ENCODE measurements at regions of chr15 and their contacts with region 1.

Region 1: DNA sequence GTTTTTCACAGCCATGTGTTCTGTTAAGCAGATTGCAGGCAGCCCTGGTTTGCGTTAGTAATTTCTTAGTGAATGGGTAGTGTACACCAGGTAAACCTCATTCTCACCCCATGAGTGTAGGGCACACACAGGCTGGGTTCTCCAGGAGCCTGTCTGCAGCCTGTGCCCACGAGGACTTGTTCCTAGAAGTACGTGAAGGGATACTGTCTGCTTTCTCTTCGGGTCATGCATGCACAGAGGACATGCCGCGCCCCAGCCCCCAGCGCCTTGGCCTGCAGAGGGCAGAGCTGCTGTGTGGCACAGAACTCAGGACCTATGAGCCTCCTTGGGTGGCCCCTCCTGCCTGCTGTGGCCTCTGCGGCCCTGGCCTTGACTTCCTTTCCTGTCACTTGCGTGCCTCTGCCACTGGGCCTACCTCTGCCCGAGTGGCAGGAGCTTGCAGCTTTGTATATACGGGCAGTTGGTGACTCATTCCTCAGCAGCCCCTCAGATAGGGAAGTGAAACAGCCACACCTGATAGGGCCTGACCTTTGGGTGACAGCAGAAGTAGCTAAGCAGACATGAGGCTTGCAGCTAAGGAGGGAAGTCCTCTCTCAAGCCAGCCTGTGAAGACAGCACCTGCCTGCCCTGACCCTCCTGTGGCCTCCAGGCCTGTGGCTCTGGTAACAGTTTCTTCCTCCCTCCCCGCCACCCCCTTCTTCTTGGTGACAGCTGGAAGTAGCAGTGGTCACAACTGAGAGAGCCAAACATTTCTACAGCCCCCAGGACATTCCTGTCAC is 19.5 kb downstream of the PPCDC start:
- DNase-seq: peak; percentile 100
- ATAC-seq: peak; percentile 79
- H3K4me3 ChIP-seq: peak overlapping the region; percentile 50; the same call in 1 of the 2 replicates
- H3K27ac ChIP-seq: peak overlapping the region; percentile 100
- H3K4me1 ChIP-seq: peaks cover 65% of the 10 kb centered on the region
- H3K27me3 ChIP-seq: no peaks in the 10 kb centered on the region
- CTCF ChIP-seq: peak; percentile 77 to 89 (median 89)
- EP300 ChIP-seq: peak; percentile 99
- POLR2A ChIP-seq: peak; percentile 90
- RAD21 ChIP-seq: peak; percentile 81

Region 2: DNA sequence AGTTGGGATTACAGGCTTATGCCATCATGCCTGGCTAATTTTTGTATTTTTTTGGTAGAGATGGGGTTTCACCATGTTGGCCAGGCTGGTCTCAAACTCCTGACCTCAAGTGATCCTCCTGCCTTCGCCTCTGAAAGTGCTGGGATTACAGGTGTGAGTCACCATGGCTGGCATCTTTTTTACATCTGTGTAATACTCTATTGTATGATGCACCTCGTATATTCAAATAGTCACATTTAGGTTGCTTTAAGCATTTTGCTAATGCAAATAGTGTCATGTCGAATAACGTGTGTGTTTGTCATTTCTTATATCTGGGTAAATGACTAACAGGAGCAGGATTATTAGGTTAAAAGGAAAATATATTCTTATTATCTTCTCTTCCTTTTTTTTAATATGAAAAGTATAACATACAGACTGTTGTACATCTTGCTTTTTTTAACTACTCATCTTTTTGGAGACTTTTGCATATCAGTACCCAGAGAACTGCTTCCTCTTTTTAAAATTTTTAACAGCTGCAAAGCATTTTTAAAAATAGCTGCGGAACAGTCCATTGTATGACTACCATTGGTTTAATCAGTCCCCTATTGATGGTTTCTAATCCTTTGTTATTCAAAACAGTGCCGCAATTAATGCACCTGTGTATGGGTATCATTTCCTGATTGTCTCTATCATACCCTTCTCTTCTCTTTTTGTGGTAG is 34.1 kb before region 1 on chr15:
- CTCF ChIA-PET with region 1: interaction called, 3 read pairs
- POLR2A ChIA-PET with region 1: interaction called, 3 read pairs
- RAD21 ChIA-PET with region 1: interaction called, 21 read pairs
- SMC1A ChIA-PET with region 1: interaction called, 7 read pairs
- in situ Hi-C with region 1: no loop called
- intact Hi-C with region 1: no loop called
- DNase-seq: peak; percentile 83
- ATAC-seq: peak; percentile 89
- H3K4me3 ChIP-seq: peak overlapping the region; percentile 34; the same call in 1 of the 2 replicates
- H3K27ac ChIP-seq: peak overlapping the region; percentile 93
- H3K4me1 ChIP-seq: peaks cover 28% of the 10 kb centered on the region
- H3K27me3 ChIP-seq: no peaks in the 10 kb centered on the region
- CTCF ChIP-seq: no peak
- EP300 ChIP-seq: peak; percentile 50 to 75; a peak in 3 of 4 replicates
- POLR2A ChIP-seq: no peak
- RAD21 ChIP-seq: no peak

Region 3: GRCh38 chr15:75029378-75030022 is 13.4 kb before region 1 on chr15:
- CTCF ChIA-PET with region 1: interaction called, 48 read pairs
- POLR2A ChIA-PET with region 1: interaction called, 14 read pairs
- RAD21 ChIA-PET with region 1: interaction called, 36 read pairs
- SMC1A ChIA-PET with region 1: interaction called, 18 read pairs
- in situ Hi-C with region 1: no loop called
- intact Hi-C with region 1: no loop called
- DNase-seq: no peak
- ATAC-seq: peak; percentile 90
- H3K4me3 ChIP-seq: 0 out of 2 replicates have a peak overlapping the region, but pooled peaks have one; percentile 26
- H3K27ac ChIP-seq: peak overlapping the region; percentile 74
- H3K4me1 ChIP-seq: peaks cover 49% of the 10 kb centered on the region
- H3K27me3 ChIP-seq: no peaks in the 10 kb centered on the region
- CTCF ChIP-seq: peak; percentile 89 to 97 (median 92); a peak in 5 of 6 replicates
- EP300 ChIP-seq: no peak
- POLR2A ChIP-seq: no peak
- RAD21 ChIP-seq: peak; percentile 98

Region 4: DNA sequence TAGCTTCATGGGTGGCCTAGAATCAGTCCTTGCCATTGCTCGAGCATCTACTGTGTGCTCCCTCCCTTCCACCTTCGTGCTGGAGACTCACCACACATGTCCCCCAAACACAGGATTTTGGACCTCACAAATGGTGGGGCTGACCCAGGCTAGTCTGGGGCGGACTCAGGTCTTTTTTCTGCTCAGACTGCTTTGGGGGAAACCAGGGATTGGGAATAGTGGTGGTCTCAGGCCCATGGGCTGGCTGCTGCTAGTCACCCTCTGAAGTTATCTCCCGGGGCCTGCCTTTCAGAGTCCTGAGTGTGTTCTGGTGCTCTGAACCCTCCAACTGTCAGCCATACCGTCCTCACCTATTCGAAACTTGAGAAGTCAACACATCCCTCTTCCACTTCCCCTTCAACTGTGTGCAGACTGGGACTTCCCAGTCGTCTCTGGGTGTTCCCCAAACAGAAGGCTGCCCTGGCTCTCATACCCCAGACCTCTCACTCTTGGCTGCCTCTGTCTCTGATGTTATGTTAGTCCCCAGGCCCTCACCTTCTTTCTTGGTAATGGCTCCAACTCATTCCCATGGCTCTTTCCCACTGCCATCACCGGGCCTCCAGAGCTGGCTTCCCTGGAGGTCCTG is 26.5 kb after region 1 on chr15:
- CTCF ChIA-PET with region 1: interaction called, 3 read pairs
- POLR2A ChIA-PET with region 1: interaction called, 5 read pairs
- RAD21 ChIA-PET with region 1: no interaction called
- SMC1A ChIA-PET with region 1: no interaction called
- in situ Hi-C with region 1: no loop called
- intact Hi-C with region 1: loop called (anchors 1 kb)
- DNase-seq: peak; percentile 87
- ATAC-seq: peak; percentile 92
- H3K4me3 ChIP-seq: no peak overlapping the region
- H3K27ac ChIP-seq: peak overlapping the region; percentile 89
- H3K4me1 ChIP-seq: peaks cover 58% of the 10 kb centered on the region
- H3K27me3 ChIP-seq: no peaks in the 10 kb centered on the region
- CTCF ChIP-seq: no peak
- EP300 ChIP-seq: peak; percentile 90 to 91; a peak in 3 of 4 replicates
- POLR2A ChIP-seq: peak; percentile 65
- RAD21 ChIP-seq: no peak; the same call in 1 of the 2 replicates

Region 5: GRCh38 chr15:75104804-75105535 is 62.1 kb after region 1 on chr15:
- CTCF ChIA-PET with region 1: no interaction called
- POLR2A ChIA-PET with region 1: interaction called, 8 read pairs
- RAD21 ChIA-PET with region 1: interaction called, 3 read pairs
- SMC1A ChIA-PET with region 1: interaction called, 4 read pairs
- in situ Hi-C with region 1: no loop called
- intact Hi-C with region 1: loop called (anchors 1 kb)
- DNase-seq: peak; percentile 88
- ATAC-seq: peak; percentile 73
- H3K4me3 ChIP-seq: no peak overlapping the region
- H3K27ac ChIP-seq: peak overlapping the region; percentile 76
- H3K4me1 ChIP-seq: peaks cover 59% of the 10 kb centered on the region
- H3K27me3 ChIP-seq: no peaks in the 10 kb centered on the region
- CTCF ChIP-seq: 0 out of 6 replicates have a peak, but pooled peaks of 1 of the 3 experiments have one; percentile 6
- EP300 ChIP-seq: peak; percentile 61 to 76; a peak in 3 of 4 replicates
- POLR2A ChIP-seq: no peak; the same call in 1 of the 2 replicates
- RAD21 ChIP-seq: 0 out of 2 replicates have a peak, but pooled peaks have one; percentile 21

Region 6: DNA sequence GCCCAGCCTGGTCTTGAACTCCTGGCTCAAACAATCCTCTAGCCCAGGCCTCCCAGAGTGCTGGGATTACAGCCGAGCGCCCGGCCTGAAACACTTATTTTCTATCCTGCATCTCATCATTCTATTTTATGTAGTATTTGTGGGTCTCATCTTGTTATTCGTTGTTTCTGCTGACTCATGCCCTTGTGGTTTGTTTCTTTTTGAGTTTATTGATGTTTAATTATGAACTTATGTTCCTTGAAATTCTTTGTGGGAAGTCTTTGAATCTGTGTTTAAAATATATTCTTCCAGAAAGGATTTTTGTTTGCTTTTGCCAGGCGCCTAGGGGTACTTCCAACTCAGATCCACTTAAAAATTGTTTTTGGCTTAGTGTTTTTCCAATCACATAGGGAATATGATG is 80.5 kb after region 1 on chr15:
- CTCF ChIA-PET with region 1: interaction called, 36 read pairs
- POLR2A ChIA-PET with region 1: interaction called, 11 read pairs
- RAD21 ChIA-PET with region 1: interaction called, 32 read pairs
- SMC1A ChIA-PET with region 1: interaction called, 3 read pairs
- in situ Hi-C with region 1: no loop called
- intact Hi-C with region 1: loop called (anchors 1 kb)
- DNase-seq: no peak
- ATAC-seq: no peak
- H3K4me3 ChIP-seq: no peak overlapping the region
- H3K27ac ChIP-seq: peak overlapping the region; percentile 41
- H3K4me1 ChIP-seq: peaks cover 41% of the 10 kb centered on the region
- H3K27me3 ChIP-seq: no peaks in the 10 kb centered on the region
- CTCF ChIP-seq: no peak
- EP300 ChIP-seq: no peak
- POLR2A ChIP-seq: no peak
- RAD21 ChIP-seq: no peak

Region 7: DNA sequence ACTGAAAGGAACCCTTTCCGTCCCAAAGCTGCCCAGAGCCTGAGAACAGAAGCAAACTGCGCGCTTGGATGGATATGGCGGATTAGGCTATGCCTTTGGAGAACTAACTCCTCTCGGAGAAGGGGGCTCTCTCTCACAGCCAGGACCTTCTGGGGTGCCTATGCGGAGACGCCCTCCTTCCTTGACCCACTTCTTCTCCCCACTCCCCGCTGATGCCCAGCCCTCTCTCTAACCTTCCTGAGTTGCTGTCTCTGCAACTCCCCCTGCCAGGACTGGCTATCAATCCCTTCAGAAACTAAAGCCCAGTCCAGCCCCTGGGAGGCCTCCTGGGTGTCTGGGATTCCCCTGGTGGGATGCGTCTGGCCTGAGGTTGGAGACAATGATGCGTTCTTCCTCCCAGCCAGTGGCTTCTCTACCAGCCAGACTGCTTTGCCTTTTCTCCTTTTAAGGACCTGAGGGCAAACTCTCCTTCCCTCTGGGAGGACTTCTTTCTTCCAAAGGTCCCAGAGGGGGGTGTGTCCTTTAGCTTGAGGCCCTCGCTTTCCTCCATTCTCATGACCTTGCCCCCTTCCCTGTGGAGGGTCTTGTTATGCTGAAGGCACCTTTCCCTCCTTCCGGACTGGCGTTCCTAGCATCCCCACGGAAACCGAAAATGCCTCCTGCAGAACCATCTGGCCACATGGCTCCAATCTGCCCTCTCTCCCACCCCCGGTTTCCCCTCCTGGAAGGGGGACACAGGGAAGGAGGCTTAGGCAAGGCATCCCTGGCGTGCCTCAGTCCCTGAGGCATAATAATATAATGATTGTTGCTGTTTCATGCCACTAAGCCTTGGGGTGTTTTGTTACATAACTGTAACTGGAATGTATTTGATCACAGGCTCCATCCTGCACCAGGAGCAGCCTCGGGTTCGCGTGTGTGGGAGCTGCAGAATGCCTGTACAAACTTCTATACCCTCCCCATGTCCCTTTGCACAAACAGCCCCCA is 95.4 kb after region 1 on chr15:
- CTCF ChIA-PET with region 1: interaction called, 5 read pairs
- POLR2A ChIA-PET with region 1: no interaction called
- RAD21 ChIA-PET with region 1: interaction called, 12 read pairs
- SMC1A ChIA-PET with region 1: no interaction called
- in situ Hi-C with region 1: no loop called
- intact Hi-C with region 1: no loop called
- DNase-seq: no peak
- ATAC-seq: peak; percentile 21; the same call in 1 of the 3 replicates
- H3K4me3 ChIP-seq: no peak overlapping the region
- H3K27ac ChIP-seq: no peak overlapping the region
- H3K4me1 ChIP-seq: peaks cover 40% of the 10 kb centered on the region
- H3K27me3 ChIP-seq: no peaks in the 10 kb centered on the region
- CTCF ChIP-seq: no peak
- EP300 ChIP-seq: no peak
- POLR2A ChIP-seq: no peak
- RAD21 ChIP-seq: no peak

Measured in GM12878 (cell line).